ENCODE measurements at regions of chr9 and their contacts with region 1.

Region 1: DNA sequence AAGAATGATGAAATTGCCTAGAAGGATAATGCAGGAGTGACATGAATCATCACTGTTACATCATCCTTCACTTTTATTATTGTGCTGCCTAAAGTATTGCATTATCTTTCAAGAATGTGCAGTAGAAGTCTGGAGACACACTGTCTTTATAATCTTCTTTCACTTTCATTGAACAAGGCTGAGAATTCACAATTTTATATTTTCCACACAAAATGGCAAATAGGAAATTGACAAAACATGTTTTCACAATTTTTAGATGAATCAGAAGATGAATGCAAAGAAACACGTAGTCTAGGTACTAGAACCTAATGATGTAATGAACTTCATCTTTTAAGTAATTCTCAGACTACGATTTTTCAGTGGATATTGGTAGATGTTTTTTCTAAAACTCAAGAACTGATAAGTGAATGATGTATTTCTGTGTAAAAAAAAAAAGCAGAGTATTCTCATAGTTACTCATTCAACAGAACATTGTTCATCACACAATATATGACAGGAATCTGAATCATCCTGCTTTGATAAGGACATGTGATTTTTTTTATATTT is 131.5 kb upstream of the GRHPR start:
- DNase-seq: no peak
- H3K4me3 Mint-ChIP-seq: peak overlapping the region; percentile 47
- H3K27ac Mint-ChIP-seq: peak overlapping the region; percentile 92
- H3K4me1 Mint-ChIP-seq: peaks cover 60% of the 10 kb centered on the region
- H3K27me3 Mint-ChIP-seq: no peaks in the 10 kb centered on the region

Region 2: DNA sequence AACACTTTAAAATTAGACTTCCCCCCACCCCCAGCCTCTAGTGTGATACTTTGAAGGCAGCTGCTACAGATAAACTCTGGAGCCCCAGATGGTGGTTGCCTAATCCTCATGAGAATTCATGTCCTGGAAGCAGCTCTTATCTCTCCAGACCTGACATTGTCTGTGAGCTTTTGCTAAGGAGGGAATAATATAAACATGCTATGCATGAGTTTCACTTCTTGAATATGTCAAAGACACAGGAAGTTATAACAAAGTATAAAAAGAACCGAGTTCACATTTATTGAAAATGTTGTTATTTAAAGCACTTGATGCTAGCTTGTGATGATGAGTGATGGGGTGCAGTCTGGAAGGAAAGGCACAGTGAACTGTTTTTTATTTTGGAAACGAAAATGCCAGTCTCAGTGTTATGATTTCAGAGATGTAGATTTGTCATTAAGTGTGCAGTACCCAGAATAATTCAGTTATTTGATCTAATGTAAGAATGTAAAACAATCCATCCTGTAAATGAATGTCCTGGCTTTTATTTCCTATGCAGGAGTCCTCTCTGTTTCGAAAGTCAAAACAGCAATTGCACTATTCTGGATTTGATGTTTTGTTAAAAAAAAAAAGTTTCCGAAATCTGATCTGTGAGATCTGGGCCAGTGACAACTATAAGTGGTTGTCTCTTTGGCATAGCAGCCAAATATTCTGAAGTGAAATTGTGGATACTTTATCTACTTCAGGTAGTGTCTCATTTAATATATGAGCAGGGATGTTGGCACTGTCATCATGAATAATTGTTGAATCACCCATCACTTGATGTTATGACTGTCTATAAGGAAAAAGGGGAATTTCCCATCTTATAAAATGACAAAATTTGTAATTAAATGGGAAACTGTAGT is 93.6 kb before region 1 on chr9:
- CTCF ChIA-PET with region 1: no interaction called
- POLR2A ChIA-PET with region 1: no interaction called
- intact Hi-C with region 1: loop called (anchors 2 kb)
- DNase-seq: no peak
- H3K4me3 Mint-ChIP-seq: peak overlapping the region; percentile 8
- H3K27ac Mint-ChIP-seq: peak overlapping the region; percentile 77
- H3K4me1 Mint-ChIP-seq: peaks cover 46% of the 10 kb centered on the region
- H3K27me3 Mint-ChIP-seq: no peaks in the 10 kb centered on the region

Region 3: GRCh38 chr9:37220971-37221370 is 70.0 kb before region 1 on chr9:
- CTCF ChIA-PET with region 1: no interaction called
- POLR2A ChIA-PET with region 1: interaction called, 4 read pairs
- intact Hi-C with region 1: loop called (anchors 1 kb)
- DNase-seq: no peak
- H3K4me3 Mint-ChIP-seq: no peak overlapping the region
- H3K27ac Mint-ChIP-seq: no peak overlapping the region
- H3K4me1 Mint-ChIP-seq: peaks cover 20% of the 10 kb centered on the region
- H3K27me3 Mint-ChIP-seq: no peaks in the 10 kb centered on the region

Region 4: GRCh38 chr9:37471942-37472679 is 181.1 kb after region 1 on chr9:
- CTCF ChIA-PET with region 1: no interaction called
- POLR2A ChIA-PET with region 1: no interaction called
- intact Hi-C with region 1: no loop called
- DNase-seq: no peak
- H3K4me3 Mint-ChIP-seq: peak overlapping the region; percentile 28
- H3K27ac Mint-ChIP-seq: peak overlapping the region; percentile 5
- H3K4me1 Mint-ChIP-seq: peaks cover 8% of the 10 kb centered on the region
- H3K27me3 Mint-ChIP-seq: peaks cover 6% of the 10 kb centered on the region

Measured in activated CD4-positive, alpha-beta memory T cell treated with anti-CD3 and anti-CD28 coated beads for 36 hours (primary cell).